ENCODE measurements at regions of chr3 and their contacts with region 1.

Region 1: DNA sequence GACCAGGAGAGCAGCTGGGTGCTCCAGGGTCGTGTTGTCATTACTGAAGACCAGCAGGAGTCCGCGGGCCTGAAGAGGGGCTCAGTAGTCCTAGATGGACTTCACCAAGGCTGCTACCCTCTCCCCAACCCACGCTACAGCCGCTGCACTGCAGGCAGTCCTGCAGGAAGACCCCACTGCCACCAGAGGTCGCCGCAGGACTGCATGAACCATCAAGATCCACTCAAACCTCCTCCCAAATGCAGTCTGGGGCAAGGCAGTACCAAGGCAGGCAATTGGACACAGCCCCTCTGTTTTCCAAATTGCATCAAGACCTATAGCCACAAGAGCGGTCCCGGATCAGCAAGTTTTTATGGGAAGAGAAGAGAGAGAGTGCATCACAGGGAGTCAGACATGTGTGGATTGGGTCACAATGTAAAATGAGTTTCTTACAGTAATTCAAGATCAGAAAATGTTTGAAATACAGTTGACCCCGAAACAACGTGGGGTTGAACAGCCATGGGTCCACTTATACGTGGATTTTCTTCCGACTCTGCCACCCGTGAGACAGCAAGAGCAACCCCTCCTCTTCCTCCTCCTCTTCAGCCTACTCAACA is 46.7 kb downstream of the DZIP1L start:
- DNase-seq: peak; percentile 86
- H3K4me3 Mint-ChIP-seq: no peak overlapping the region
- H3K27ac Mint-ChIP-seq: no peak overlapping the region
- H3K4me1 Mint-ChIP-seq: peaks cover 14% of the 10 kb centered on the region
- H3K27me3 Mint-ChIP-seq: peaks cover 25% of the 10 kb centered on the region

Region 2: DNA sequence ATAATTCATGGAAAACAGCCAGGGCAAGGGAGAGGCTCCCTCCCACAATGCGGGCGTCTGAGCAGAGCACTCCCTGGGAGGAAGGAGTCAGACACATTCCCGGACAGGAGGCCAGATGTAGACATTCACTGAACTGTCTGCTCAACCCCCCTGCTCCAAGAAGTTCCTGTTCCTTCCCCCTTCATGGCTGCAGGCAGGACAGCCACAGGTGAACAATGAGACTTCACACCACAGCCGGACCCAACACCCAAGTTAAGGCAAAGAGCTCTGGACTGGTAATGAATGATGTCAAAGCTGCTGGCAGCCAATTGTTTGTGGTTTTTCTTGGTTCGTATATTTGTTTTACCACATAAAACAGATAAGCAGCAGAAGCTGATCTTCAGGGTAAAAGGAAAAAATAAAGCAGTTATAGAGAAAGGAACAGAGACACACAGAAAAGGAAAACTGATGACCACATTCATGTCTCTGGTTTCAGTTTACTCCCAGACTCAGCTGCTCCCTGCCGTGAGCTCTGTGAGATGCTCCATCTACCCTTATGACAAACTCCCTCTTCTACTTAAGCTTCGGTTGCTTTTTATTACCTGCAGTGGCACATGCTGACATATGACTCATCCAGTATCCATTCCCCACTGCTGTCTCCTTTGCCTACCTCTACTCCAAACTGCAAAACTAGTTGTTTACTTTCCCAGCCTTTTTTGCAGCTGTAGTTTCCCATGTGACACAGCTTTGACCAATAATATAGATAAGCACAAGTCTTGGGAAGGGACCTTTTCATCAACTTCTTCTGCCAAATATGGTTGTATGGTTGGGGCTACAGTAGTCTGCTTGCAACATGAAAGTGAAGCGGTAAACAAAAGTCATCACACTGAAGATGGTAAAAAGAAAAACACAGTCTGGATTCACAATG is 13.7 kb after region 1 on chr3:
- CTCF ChIA-PET with region 1: interaction called, 8 read pairs
- POLR2A ChIA-PET with region 1: interaction called, 11 read pairs
- intact Hi-C with region 1: loop called (anchors 1 kb)
- DNase-seq: peak; percentile 39
- H3K4me3 Mint-ChIP-seq: peak overlapping the region; percentile 3
- H3K27ac Mint-ChIP-seq: peak overlapping the region; percentile 57
- H3K4me1 Mint-ChIP-seq: peaks cover 28% of the 10 kb centered on the region
- H3K27me3 Mint-ChIP-seq: no peaks in the 10 kb centered on the region

Region 3: DNA sequence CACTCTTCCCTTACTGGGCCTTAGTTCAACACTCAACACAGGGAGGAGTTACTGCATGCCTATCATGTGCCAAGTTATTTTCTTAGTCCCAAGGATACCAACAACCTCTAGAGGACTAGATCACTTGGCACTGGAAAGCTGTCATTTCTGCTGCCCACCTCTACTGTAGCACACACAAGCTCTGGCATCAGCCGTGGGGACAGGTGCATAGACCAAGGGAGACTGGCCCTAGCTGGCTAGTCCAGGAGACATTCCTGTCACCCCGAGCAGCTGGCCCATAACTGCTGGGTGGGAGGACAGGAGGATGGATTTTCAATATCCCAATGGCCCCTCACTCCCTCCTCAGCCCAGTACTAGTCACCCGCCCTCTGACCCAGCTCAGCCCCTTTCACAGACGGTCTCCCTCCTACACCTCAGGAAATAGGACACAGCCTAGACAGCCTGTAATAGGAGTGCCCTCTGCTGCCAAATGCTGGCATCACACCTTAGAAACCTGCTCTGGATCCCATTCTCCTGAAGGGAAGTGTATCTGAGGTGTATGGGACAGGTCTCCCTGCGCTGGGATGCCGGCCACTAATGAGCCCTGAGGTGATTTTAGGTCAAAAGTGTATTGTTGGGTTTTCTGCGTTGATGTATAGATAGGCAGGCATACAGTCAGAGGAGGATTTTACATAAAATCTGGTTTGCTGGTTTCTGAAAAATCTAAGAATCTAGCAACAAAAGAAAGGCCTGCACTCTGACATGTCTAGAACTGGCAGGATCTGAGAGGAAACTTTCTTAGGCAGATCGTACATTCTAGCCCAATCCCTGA is 50.1 kb after region 1 on chr3:
- CTCF ChIA-PET with region 1: interaction called, 127 read pairs
- POLR2A ChIA-PET with region 1: no interaction called
- intact Hi-C with region 1: loop called (anchors 1 kb)
- DNase-seq: peak; percentile 77
- H3K4me3 Mint-ChIP-seq: no peak overlapping the region
- H3K27ac Mint-ChIP-seq: no peak overlapping the region
- H3K4me1 Mint-ChIP-seq: peaks cover 5% of the 10 kb centered on the region
- H3K27me3 Mint-ChIP-seq: peaks cover 25% of the 10 kb centered on the region

Region 4: DNA sequence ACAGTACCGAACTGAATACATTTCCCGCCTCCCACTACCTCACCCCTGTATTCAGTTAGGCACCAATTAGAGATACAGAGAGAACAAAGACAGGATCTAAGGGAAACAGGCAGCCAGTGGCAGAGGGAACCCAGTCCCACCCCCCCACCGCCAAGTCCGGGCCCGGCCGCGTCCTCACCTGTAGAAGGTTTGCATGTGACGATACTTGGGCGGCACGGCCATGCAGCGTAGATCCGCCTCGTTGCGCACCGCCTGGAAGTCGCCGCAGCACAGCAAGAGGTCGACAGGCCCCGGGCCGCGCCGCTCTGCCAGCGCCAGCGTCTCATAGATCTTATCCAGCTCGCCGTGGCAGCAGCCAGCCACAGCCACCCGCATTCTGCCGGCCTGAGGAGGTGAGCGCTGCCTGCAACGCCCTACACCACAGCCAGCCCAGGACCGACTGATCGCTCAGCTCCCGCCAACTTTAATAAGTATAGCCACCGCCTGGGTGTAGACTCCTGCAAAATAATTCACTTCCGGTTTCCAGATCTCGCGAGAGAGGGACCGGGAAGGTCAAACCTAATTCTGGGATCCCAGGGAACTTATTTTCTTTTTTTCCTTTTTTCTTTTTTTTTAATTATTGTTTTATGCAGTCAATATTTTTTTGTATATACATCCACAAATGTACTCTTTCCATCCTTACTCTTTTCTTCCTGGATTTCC is 105.9 kb after region 1 on chr3 and contains the start of gene DBR1:
- CTCF ChIA-PET with region 1: no interaction called
- POLR2A ChIA-PET with region 1: no interaction called
- intact Hi-C with region 1: loop called (anchors 5 kb)
- DNase-seq: peak; percentile 77
- H3K4me3 Mint-ChIP-seq: peak within 1 kb of the TSS; percentile 96
- H3K27ac Mint-ChIP-seq: peak within 1 kb of the TSS; percentile 97
- H3K4me1 Mint-ChIP-seq: peaks cover 38% of the 10 kb centered on the region
- H3K27me3 Mint-ChIP-seq: no peaks in the 10 kb centered on the region
- total RNA-seq, gene DBR1: 21.7 to 22.6 TPM

Region 5: DNA sequence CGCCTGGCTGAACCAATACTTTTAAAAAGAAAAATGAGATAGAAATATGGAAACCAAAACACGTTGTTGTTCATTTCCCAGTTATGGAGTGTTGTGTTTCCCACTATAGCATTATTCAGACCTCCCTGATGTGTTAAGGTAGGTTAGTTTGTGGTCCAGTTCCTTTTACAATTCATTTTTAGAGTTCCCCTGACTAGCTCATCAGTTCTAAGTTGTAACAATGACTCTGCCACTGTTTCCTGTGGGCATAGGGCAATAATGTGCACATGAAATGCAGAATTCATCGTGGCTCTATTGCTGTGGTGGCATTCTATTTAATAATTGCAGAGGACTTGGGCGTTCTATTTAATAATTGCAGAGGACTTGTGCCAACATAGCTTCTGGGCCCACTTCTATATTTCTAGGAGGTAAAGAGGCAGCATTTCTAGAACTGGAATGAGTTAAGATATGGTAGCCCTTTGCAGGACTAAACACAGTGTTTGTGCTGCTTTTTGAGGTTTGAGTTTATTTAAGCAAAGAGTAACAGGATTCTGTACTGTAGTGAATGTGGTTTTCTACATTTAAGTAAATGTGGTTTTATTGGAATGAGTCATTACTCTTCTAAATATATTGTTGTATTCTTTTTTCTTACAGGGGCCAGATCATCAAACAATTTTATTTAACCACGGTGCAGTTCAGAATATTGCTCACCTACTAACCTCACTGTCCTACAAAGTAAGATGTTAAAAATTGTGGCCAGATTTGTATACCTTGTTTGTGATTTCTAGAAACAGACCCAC is 165.9 kb after region 1 on chr3:
- CTCF ChIA-PET with region 1: no interaction called
- POLR2A ChIA-PET with region 1: no interaction called
- intact Hi-C with region 1: loop called (anchors 5 kb)
- DNase-seq: no peak
- H3K4me3 Mint-ChIP-seq: no peak overlapping the region
- H3K27ac Mint-ChIP-seq: peak overlapping the region; percentile 42
- H3K4me1 Mint-ChIP-seq: peaks cover 21% of the 10 kb centered on the region
- H3K27me3 Mint-ChIP-seq: no peaks in the 10 kb centered on the region

Region 6: GRCh38 chr3:138296639-138297038 is 228.0 kb after region 1 on chr3:
- CTCF ChIA-PET with region 1: no interaction called
- POLR2A ChIA-PET with region 1: no interaction called
- intact Hi-C with region 1: no loop called
- DNase-seq: peak; percentile 67
- H3K4me3 Mint-ChIP-seq: peak overlapping the region; percentile 31
- H3K27ac Mint-ChIP-seq: peak overlapping the region; percentile 83
- H3K4me1 Mint-ChIP-seq: peaks cover 33% of the 10 kb centered on the region
- H3K27me3 Mint-ChIP-seq: no peaks in the 10 kb centered on the region

Region 7: DNA sequence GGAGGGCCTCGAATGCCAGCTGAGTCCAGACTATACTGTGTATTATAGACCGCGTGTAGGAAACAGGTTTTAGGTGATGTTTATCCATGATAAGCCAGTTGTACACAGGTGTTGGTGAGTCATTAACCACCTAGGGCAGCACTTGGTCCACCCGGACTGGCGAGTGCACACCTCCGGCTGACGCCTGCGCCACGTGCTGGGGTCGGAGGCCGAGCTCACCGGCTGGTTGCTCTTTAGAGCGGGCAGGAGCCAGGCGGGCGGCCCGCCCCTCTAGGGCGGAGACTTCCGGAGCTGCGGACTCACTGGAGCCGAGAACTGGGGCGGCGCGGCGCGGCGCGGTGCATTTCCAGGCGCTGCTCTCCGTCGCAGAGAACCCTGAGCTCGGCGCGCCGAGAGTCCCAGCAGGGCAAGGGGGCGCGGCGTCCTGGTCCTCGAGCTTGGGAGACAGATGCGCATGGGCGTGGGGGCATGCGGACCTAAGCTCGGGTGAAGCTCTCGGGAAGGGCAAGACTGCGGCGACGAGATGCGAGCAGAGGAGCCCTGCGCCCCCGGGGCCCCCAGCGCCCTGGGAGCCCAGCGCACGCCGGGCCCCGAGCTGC is 365.7 kb after region 1 on chr3 and contains the start of gene ESYT3:
- CTCF ChIA-PET with region 1: no interaction called
- POLR2A ChIA-PET with region 1: no interaction called
- intact Hi-C with region 1: no loop called
- DNase-seq: peak; percentile 80
- H3K4me3 Mint-ChIP-seq: peak within 1 kb of the TSS; percentile 69
- H3K27ac Mint-ChIP-seq: no peak within 1 kb of the TSS
- H3K4me1 Mint-ChIP-seq: peaks cover 10% of the 10 kb centered on the region
- H3K27me3 Mint-ChIP-seq: peaks cover 47% of the 10 kb centered on the region
- total RNA-seq, gene ESYT3: 0.17 to 0.19 TPM

Measured in activated CD4-positive, alpha-beta memory T cell treated with anti-CD3 and anti-CD28 coated beads for 36 hours (primary cell).